ENCODE measurements at regions of chr6 and their contacts with region 1.

Region 1: DNA sequence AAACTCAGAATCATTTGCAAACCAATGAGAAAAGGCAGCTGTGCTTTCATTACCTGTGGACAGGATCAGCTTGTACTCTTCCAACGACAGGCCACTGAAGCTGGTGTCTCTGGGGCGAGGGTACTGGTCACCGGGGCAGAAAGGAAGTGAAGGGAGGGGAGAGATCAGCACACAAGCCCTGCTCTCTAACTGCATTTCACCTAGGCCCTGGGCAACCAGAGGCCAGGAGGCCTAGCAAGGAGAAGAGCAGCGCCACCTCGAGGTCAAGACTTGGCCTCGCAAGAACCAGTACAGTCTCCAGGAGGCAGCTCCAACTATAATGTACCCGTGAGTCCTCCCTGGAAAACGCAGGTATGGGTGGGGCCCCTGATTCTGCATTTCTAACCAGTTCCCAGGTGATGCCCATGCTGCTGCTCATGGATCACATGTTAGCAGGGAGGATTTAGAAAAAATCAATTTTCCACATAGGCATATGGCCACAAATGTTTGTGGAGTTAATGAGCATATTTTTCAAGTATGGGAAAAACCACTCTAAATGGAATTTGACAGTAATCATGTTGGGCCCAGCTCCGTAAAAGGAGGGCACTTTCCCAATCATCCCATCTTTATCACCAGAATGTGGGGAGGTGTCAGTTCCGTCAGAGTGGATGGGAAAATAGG is 11.0 kb downstream of the UQCC2 start:
- DNase-seq: peak; percentile 77
- CTCF ChIP-seq: peak; percentile 82

Region 2: DNA sequence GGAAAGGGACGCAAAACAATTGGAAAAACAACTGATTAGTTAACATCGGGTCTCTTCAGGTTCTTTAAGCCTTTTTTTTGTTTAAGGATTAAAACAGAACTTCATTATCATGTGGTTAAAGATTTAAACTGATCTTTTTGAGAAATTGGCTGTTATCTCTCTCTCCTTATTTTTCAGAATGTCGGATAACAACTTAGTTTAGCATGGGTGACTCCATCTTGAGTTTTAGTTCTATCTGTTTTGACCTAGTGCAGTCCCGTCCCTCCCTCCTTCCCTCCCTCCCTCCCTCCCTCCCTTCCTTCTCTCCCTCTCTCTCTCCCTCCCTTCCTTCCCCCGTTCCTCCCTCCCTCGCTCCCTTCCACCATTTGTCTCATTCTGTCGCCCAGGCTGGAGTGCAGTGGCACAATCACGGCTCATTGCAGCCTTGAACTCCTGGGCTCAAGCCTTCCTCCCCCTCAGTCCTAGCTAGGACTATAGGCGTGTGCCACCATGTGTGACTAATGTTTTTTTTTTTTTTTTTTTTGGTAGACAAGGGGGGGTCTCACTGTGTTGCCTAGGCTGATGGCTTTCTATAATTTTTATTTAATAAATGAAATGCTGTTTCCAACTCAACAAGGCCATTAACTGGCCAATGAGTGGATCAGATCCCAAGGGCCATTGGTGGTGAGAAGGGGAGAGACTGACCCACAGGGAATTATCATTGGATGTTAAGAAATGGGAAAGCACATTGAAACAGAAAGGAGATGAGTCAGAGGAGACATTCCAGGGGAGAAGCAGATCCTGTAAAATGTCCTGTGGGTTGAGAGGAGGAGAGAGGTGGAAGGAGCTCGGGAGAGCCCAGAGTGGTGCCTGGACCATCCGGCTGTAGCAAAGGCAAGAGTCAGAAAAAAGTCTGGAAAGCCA is 134.1 kb before region 1 on chr6:
- CTCF ChIA-PET with region 1: no interaction called
- POLR2A ChIA-PET with region 1: no interaction called
- DNase-seq: no peak
- CTCF ChIP-seq: no peak

Region 3: DNA sequence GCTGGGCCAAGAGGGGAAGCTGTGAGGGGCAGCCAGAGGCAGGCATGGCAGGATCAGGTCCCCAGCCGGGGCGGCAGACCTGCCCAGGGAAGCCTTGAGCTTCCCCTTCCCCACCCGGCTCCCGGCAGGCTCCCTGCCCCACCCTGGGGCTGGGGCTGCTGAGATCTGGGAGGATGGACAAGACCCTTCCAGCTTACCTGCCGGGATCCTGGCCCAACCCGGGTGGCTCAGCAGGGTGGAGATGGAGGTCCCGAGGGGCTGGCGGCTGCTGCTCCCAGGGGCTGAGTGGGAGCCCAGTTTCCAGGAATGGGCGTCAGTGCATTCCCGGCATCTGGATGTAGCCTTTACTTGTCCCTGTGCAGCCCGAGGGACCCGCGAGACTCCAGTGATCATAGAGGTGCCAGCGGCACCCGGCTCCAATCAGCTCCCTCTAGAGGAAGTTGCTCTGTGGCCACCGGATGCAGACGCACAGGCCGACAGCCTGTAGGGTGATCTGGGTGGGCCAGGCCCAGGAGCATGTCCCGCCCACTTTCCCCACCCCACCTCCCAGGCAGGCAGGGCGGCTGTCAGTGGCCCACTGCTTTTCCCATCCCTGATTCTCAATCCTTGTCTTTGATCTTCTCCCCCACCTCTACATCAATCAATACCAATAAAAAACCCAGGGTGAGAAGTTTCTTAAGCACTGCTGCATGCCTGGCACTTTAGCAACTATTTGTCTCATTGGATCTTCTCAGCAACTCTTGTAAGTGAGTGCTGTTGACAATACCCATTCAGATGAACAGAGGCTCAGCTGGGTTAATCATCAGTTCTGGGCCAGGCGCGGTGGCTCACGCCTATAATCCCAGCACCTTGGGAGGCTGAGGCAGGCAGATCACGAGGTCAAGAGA is 120.5 kb before region 1 on chr6 and contains the start of gene BAK1:
- CTCF ChIA-PET with region 1: interaction called, 231 read pairs
- POLR2A ChIA-PET with region 1: no interaction called
- DNase-seq: peak; percentile 94
- CTCF ChIP-seq: peak; percentile 48

Region 4: DNA sequence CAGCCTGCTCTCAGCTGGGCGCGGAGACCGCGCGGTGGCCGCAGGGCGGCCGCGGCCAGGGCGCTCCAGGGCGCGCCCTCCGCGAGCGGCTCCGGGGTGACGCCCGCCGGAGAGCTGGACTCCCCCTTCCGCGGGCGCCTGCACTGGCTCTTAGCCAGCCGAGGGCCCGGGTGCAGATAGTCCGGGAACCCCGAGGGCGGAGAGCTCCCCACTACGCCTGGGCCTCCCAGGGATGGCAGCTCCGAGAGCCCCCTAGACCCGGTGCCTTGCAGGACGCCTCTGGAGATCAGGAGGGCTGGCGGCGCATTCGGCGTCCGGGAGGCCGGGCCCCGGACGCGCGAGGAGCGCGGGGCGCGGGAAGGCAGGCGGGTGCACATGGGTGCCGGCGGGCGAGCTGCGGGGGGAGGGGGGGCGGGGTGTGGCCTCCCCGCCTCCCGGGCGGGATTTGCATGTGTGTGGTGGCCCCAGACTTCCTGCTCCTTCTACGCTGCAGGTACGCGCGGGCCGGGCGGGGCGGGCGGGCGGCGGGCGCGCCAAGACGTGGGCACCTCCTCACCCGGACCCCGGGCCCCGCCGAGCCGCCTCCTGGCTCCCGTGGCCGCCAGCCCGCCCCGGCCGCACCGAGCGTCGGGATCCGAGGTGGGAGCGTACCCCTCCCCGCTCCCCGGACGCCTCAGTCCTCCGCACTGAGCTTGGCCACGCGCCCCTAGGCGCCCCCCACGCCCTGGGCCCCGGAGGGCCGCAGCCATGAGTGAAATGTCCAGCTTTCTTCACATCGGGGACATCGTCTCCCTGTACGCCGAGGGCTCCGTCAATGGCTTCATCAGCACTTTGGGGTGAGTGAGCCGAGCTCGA is 79.4 kb before region 1 on chr6 and contains the start of gene ITPR3:
- CTCF ChIA-PET with region 1: interaction called, 18 read pairs
- POLR2A ChIA-PET with region 1: no interaction called
- DNase-seq: peak; percentile 97
- CTCF ChIP-seq: no peak

Region 5: GRCh38 chr6:33685411-33686224 is 14.9 kb before region 1 on chr6:
- CTCF ChIA-PET with region 1: interaction called, 39 read pairs
- POLR2A ChIA-PET with region 1: no interaction called
- DNase-seq: no peak
- CTCF ChIP-seq: no peak

Region 6: DNA sequence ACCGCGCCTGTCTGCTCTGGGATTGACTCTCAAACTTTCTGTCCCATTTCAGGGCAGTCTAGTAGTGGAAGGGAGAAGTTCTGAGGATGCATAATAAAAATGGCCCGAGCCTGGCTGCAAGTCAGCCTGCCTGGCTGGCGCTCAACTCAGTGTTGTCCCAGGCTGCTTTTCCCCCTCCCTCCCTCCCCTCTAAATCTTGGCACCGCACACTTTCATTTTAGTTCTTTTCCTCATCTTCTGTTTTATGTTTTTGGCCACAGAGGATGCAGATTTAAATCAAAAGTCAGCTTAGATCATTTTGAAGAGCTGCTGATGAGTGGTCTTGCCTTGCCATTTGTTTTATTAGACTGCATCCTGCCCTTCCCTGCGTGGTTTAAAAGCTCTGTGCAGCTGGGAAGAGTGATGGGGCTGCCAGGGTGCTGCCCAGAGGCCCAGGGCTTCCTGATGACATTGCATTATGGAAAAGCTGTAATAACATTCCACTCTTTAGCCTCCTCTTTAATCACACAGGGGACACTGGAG is 17.5 kb after region 1 on chr6:
- CTCF ChIA-PET with region 1: interaction called, 28 read pairs
- POLR2A ChIA-PET with region 1: no interaction called
- DNase-seq: no peak
- CTCF ChIP-seq: no peak